ENCODE measurements at regions of chr6 and their contacts with region 1.

Region 1: GRCh38 chr6:148746363-148747144 is at the start of gene UST:
- DNase-seq: no peak
- H3K4me3 Mint-ChIP-seq: peak within 1 kb of the TSS; percentile 91
- H3K27ac Mint-ChIP-seq: peak within 1 kb of the TSS; percentile 31
- H3K4me1 Mint-ChIP-seq: peaks cover 23% of the 10 kb centered on the region
- H3K27me3 Mint-ChIP-seq: peaks cover 75% of the 10 kb centered on the region
- total RNA-seq, gene UST: 0.29 and 0.49 TPM in 2 replicates

Region 2: DNA sequence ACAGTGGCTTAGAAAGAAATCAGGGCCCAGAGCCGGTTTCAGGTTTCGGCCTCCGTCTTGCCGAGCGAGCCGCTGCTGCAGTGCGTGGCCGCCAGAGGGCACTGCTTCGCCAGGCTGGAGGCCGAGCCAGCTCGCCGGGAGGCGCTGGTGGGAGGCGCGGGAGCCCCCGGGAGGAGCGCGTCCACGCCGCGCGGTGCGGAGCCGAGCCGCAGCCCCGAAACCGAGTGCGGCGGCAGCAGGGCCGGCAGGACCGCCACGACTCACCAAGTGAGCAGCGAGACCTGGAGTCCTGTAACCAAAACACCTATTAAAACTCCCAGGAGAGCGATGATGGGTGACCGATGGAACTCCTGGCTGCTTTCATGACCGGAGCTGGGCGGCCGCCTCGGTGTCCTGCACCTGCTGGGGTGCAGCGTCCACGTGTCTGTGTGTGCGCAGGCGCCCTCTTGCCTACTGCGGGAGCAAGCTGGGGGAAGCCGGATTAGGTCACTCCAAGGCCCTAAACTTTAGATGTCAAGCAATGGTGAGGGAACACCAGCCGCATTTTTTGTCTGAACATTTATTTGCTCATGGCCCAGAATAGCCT is 186.6 kb before region 1 on chr6:
- intact Hi-C with region 1: loop called (anchors 5 kb)
- DNase-seq: peak; percentile 55
- H3K4me3 Mint-ChIP-seq: no peak overlapping the region
- H3K27ac Mint-ChIP-seq: no peak overlapping the region
- H3K4me1 Mint-ChIP-seq: peaks cover 7% of the 10 kb centered on the region
- H3K27me3 Mint-ChIP-seq: peaks cover 14% of the 10 kb centered on the region

Region 3: GRCh38 chr6:148835920-148836441 is 89.4 kb after region 1 on chr6:
- intact Hi-C with region 1: loop called (anchors 5 kb)
- DNase-seq: no peak
- H3K4me3 Mint-ChIP-seq: no peak overlapping the region
- H3K27ac Mint-ChIP-seq: no peak overlapping the region
- H3K4me1 Mint-ChIP-seq: peaks cover 12% of the 10 kb centered on the region
- H3K27me3 Mint-ChIP-seq: peaks cover 18% of the 10 kb centered on the region

Region 4: DNA sequence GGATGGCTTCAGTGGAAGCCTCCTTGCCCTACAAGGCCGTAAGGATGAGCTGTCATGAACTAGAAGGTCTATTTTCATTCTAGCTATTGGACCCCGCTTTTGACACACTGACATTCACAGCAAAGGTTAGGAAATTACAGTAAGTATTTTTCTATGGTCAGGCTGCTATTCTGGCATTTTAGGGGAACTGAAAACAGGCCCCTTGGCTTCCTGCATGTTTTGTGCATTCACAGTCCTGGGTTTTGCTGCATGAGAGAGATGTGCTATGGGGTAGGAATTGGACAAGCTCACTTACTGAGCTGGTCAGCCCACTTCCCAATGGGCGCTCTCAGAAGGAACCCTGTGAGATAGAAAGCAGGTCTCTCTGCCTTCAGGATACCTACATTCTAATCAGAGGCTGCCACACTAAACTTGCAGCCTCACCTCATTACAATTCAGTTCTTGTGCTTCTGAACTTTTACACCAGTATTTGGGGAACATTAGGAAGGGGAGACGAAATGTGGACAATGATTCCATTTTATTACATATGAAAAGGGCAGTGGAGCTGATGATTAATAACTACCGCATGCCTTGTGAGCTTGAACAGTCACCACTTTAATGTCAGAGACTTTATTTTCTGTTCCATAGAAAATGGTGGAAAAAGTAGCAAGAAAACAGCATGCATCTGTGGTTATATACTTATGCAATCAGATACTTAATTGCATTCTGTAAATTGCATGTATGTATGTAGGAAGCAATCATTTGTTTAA is 484.3 kb after region 1 on chr6:
- intact Hi-C with region 1: no loop called
- DNase-seq: no peak
- H3K4me3 Mint-ChIP-seq: peak overlapping the region; percentile 6
- H3K27ac Mint-ChIP-seq: peak overlapping the region; percentile 68
- H3K4me1 Mint-ChIP-seq: peaks cover 82% of the 10 kb centered on the region
- H3K27me3 Mint-ChIP-seq: no peaks in the 10 kb centered on the region